Mammary epithelial cell (primary cell): ENCODE measurements at regions of chr19 and their contacts with region 1.

Region 1: GRCh38 chr19:10662384-10663251 is 8.5 kb downstream of the ILF3 start:
- DNase-seq: no peak
- H3K4me3 ChIP-seq: no peak overlapping the region
- H3K27ac ChIP-seq: no peak overlapping the region
- H3K4me1 ChIP-seq: peaks cover 26% of the 10 kb centered on the region
- H3K27me3 ChIP-seq: no peaks in the 10 kb centered on the region
- CTCF ChIP-seq: no peak

Region 2: GRCh38 chr19:10454267-10454666 is 208.4 kb before region 1 on chr19:
- CTCF ChIA-PET with region 1: no interaction called
- dilution Hi-C with region 1: loop called (anchors 10 kb)
- in situ Hi-C with region 1: no loop called
- intact Hi-C with region 1: no loop called
- DNase-seq: no peak
- H3K4me3 ChIP-seq: no peak overlapping the region
- H3K27ac ChIP-seq: no peak overlapping the region
- H3K4me1 ChIP-seq: no peaks in the 10 kb centered on the region
- H3K27me3 ChIP-seq: peaks cover 4% of the 10 kb centered on the region
- CTCF ChIP-seq: no peak

Region 3: GRCh38 chr19:10742476-10742875 is 79.9 kb after region 1 on chr19:
- CTCF ChIA-PET with region 1: no interaction called
- dilution Hi-C with region 1: no loop called
- in situ Hi-C with region 1: no loop called
- intact Hi-C with region 1: no loop called
- DNase-seq: no peak
- H3K4me3 ChIP-seq: no peak overlapping the region
- H3K27ac ChIP-seq: no peak overlapping the region
- H3K4me1 ChIP-seq: peaks cover 5% of the 10 kb centered on the region
- H3K27me3 ChIP-seq: no peaks in the 10 kb centered on the region
- CTCF ChIP-seq: no peak